H1 (cell line): ENCODE measurements at regions of chr3 and their contacts with region 1.

Region 1: DNA sequence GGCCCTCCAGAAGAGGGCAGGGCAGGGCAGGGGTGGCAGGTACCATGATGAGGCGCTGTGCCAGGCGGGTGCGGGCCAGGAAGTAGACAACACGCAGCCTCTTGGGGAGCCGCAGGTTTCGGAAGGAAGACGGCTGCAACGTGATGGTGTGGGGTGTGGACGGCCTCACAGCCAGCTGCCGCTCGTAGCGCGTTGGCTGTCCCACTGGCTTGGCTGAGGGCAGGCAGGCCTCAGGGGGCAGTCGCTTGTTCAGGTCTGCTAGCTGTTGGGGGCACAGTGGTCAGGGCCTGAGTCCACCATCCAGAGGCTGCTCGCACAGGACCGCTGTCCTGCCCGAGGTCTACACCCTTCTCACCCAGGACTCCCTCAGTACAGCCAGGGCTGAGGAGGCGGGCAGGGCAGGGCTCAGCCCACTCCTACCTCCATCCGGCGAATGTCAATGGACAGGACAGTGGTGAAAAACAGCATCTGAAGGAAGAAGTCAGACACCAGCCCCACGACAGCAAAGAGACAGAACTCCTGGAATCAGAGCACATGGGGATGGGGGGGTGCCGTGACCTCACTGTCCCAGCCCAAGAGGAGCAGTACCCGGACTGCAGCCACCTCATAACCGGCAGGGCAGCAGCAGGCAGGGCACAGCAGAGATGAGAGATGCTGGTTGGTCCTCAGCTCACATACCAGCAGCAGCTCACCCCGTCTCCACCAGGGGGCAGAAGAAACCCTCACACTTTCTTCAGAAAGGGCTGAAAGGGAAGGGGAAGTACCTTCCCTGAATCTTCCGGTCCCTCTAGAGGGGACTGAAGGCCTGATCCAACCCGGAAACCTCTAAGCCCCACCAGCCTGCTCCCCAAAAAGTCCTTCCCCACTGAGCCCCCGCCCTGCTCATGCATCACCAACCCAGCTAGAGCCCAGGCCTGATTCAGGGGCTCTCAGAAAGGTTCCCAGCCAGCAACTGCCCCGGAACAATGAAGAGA is 40.0 kb downstream of the PTPN23 start:
- DNase-seq: peak; percentile 81 to 97
- H3K4me3 ChIP-seq: no peak overlapping the region
- H3K27ac ChIP-seq: peak overlapping the region; percentile 57; the same call in 1 of the 2 replicates
- H3K4me1 ChIP-seq: peaks cover 0 to 2% (median 0%) of the 10 kb centered on the region in 4 experiments; a peak in 2 of 7 replicates
- H3K27me3 ChIP-seq: no peaks in the 10 kb centered on the region
- CTCF ChIP-seq: peak in 2 of 3 experiments; percentile 90 to 99; a peak in 3 of 4 replicates
- EP300 ChIP-seq: no peak; a peak in 1 of 3 replicates
- POLR2A ChIP-seq: peak in 1 of 2 experiments; percentile 39; a peak in 1 of 3 replicates
- RAD21 ChIP-seq: peak; percentile 86 to 88

Region 2: DNA sequence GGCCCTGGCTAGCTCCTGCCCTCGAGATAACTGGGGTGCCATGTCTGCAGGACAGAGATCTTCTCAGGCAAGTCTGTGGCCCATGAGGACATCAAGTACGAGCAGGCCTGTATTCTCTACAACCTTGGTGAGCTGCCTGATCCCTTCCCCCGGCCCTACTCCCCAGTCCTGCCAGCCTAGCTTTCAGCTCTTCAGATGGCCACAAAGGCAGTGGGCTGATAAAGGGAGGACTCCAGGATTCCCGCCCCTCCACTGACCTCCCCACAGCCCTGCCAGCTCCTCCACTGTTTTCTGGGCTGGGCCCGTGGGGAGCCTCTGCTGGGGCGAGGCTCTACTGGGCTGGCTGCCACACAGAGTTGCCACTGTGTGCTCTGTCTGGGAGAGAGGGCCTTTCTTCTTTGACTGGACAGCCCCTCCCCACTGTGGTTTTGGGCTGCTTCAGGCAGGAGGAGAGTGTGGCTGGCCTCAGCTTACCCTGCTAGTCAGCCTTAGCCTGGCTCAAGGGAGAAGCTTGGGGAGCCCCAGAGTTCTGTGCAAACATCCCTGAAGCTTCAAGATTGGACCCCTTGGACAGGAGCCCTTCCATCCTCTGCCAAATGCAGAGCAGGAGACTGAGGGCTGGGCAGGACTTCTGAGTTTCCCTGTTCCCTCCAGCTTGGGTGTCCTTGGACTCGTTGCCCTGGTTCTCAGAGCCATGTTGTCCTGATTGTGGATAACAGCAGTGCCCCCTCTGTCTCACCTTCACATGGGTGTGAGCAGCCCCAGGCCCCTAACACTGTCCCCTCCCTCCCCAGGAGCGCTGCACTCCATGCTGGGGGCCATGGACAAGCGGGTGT is 15.6 kb before region 1 on chr3:
- CTCF ChIA-PET with region 1: interaction called, 55 read pairs
- POLR2A ChIA-PET with region 1: interaction called, 8 read pairs
- DNase-seq: no peak
- H3K4me3 ChIP-seq: no peak overlapping the region
- H3K27ac ChIP-seq: no peak overlapping the region
- H3K4me1 ChIP-seq: no peaks in the 10 kb centered on the region
- H3K27me3 ChIP-seq: no peaks in the 10 kb centered on the region
- CTCF ChIP-seq: no peak
- EP300 ChIP-seq: no peak
- POLR2A ChIP-seq: no peak
- RAD21 ChIP-seq: no peak

Region 3: GRCh38 chr3:47433796-47434195 is 13.0 kb after region 1 on chr3:
- CTCF ChIA-PET with region 1: interaction called, 66 read pairs
- POLR2A ChIA-PET with region 1: interaction called, 4 read pairs
- DNase-seq: no peak
- H3K4me3 ChIP-seq: no peak overlapping the region
- H3K27ac ChIP-seq: no peak overlapping the region
- H3K4me1 ChIP-seq: peaks cover 0 to 3% (median 0%) of the 10 kb centered on the region in 4 experiments; a peak in 1 of 7 replicates
- H3K27me3 ChIP-seq: no peaks in the 10 kb centered on the region
- CTCF ChIP-seq: no peak
- EP300 ChIP-seq: no peak
- POLR2A ChIP-seq: no peak
- RAD21 ChIP-seq: no peak

Region 4: DNA sequence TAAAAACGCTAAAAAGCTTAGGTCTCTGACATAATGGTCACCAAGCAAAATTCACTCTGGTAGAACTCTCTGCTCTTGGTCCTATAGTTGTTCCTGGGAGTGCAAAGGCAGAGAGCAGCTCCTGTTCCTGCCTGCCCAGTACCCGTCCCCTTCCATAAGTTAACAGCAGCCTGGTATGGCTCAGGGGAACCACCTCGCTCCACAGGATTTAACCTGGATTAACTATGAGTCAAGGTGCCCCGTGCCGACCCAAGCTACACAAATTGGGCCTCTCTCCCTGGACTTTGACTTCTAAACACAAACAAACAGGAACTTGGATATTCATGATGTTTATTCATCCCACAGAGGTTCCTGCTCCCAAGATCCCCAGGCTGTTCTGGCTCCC is 22.8 kb after region 1 on chr3:
- CTCF ChIA-PET with region 1: interaction called, 10 read pairs
- POLR2A ChIA-PET with region 1: interaction called, 3 read pairs
- DNase-seq: no peak
- H3K4me3 ChIP-seq: no peak overlapping the region
- H3K27ac ChIP-seq: peak overlapping the region; percentile 57; the same call in 1 of the 2 replicates
- H3K4me1 ChIP-seq: peaks cover 0 to 2% (median 0%) of the 10 kb centered on the region in 4 experiments; a peak in 2 of 7 replicates
- H3K27me3 ChIP-seq: no peaks in the 10 kb centered on the region
- CTCF ChIP-seq: no peak
- EP300 ChIP-seq: no peak
- POLR2A ChIP-seq: no peak
- RAD21 ChIP-seq: no peak

Region 5: DNA sequence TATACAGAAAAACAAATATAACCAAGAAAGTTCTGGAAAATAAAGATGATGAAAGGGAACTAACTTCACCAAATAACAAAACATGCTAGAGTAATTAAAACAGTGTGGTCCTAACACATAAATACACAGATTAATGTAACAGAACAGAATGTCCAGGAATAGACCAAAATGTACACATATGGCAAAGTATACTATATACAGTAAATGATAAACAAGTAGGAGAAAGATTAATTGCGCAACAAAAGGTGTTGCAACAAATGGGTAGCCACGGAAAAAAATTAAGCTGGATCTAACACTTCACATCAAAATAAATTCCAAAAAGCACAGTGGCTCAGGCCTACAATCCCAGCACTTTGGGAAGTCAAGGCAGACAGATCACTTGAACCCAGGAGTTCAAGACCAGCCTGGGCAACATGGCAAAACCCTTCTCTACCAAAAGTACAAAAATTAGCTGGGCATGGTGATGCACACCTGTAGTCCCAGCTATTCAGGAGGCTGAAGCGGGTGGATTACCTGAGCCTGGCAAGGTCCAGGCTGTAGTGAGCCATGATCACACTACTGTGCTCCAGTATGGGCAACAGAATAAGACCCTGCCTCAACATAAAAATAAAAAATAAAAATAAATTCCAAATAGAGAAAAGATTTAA is 35.1 kb after region 1 on chr3:
- CTCF ChIA-PET with region 1: interaction called, 11 read pairs
- POLR2A ChIA-PET with region 1: interaction called, 3 read pairs
- DNase-seq: no peak
- H3K4me3 ChIP-seq: no peak overlapping the region
- H3K27ac ChIP-seq: no peak overlapping the region
- H3K4me1 ChIP-seq: 0 out of 7 replicates have a peak, but pooled peaks cover 0 to 2% (median 0%) of the 10 kb centered on the region in 4 experiments
- H3K27me3 ChIP-seq: no peaks in the 10 kb centered on the region
- CTCF ChIP-seq: no peak
- EP300 ChIP-seq: no peak
- POLR2A ChIP-seq: no peak
- RAD21 ChIP-seq: no peak

Region 6: DNA sequence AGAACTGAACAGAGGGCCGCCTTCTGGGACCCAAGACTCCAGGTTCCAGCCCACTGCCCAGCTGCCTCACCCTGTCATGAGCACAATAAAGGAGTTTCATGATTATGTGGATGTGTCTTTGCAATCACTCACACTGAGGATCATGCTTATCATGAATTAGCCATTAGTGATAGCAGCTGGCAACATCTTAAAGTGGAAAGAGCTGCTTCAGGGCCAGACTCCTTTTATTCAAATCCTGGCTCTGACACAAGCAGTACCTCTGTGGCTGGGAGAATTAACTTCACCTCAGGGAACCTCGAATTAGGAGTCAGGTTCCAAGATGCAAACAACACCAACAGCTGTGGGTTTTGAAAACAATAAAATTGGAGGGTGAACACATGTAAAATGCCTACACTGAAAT is 61.6 kb after region 1 on chr3:
- CTCF ChIA-PET with region 1: interaction called, 10 read pairs
- POLR2A ChIA-PET with region 1: no interaction called
- DNase-seq: no peak
- H3K4me3 ChIP-seq: peak overlapping the region in 3 of 4 experiments; percentile 1 to 44 (median 26); a peak in 4 of 8 replicates
- H3K27ac ChIP-seq: peak overlapping the region; percentile 49; the same call in 1 of the 2 replicates
- H3K4me1 ChIP-seq: peaks cover 2 to 12% (median 6%) of the 10 kb centered on the region in 4 experiments; a peak in 4 of 7 replicates
- H3K27me3 ChIP-seq: no peaks in the 10 kb centered on the region
- CTCF ChIP-seq: no peak
- EP300 ChIP-seq: no peak
- POLR2A ChIP-seq: no peak
- RAD21 ChIP-seq: no peak

Region 7: GRCh38 chr3:47491186-47491585 is 70.4 kb after region 1 on chr3:
- CTCF ChIA-PET with region 1: interaction called, 24 read pairs
- POLR2A ChIA-PET with region 1: no interaction called
- DNase-seq: no peak
- H3K4me3 ChIP-seq: no peak overlapping the region
- H3K27ac ChIP-seq: no peak overlapping the region
- H3K4me1 ChIP-seq: no peaks in the 10 kb centered on the region
- H3K27me3 ChIP-seq: no peaks in the 10 kb centered on the region
- CTCF ChIP-seq: no peak
- EP300 ChIP-seq: no peak
- POLR2A ChIP-seq: no peak
- RAD21 ChIP-seq: no peak